Activated naive CD4-positive, alpha-beta T cell treated with anti-CD3 and anti-CD28 coated beads for 36 hours (primary cell): ENCODE measurements at regions of chr5 and their contacts with region 1.

Region 1: DNA sequence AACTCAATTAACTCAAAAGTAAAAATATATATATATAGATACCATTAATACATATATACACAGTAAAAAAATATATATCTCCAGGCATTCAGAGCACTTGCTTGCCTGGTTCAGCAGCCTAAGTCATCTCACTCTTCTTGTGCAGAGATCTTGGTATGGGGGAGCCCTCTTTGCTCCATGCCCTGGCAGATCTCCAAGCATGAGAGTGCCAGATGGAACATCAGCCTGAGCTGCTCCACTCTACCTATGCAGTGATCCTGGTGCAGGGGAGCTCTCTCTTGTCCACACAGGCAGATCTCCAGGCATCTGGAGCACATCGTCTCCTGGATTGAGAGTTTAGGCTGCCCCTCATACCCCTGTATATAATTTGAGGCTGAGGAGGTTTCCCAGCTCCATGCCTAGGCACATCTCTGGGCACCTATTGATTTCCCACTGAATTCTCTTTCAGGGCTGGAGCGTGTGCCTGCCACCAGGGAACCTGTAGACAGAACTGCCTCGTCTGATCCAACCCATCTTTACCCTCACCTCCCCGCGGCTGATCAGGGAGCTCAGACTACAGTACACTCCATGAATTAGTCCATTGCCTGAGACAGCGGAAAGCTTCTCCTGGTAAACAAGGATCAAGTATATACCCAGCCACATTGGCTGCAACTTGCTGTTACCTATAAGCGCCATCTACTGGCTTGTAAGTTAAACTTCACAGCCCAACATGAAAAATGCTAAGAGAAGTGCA is 342.4 kb upstream of the GRIA1 start:
- DNase-seq: no peak
- H3K4me3 Mint-ChIP-seq: no peak overlapping the region
- H3K27ac Mint-ChIP-seq: no peak overlapping the region
- H3K4me1 Mint-ChIP-seq: no peaks in the 10 kb centered on the region
- H3K27me3 Mint-ChIP-seq: no peaks in the 10 kb centered on the region

Region 2: DNA sequence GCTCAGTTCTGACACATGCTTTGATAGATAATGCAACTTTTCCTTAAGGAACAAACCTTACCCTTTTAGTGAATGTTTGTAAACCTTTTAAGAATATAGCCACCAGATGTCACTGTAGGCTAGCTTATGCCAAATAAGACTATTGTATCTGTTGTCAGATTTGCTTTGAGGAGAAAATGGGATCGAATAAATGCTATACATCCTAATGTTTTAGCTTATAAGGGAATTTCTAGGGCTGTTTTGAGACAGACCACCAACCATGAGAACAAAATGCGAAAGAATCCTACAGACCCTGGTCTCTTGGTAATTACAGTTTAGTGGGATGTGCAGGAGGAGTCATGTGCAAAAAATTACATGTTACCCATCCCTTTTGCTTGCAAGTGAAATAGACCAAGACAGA is 615.3 kb before region 1 on chr5:
- CTCF ChIA-PET with region 1: no interaction called
- intact Hi-C with region 1: loop called (anchors 1 kb)
- DNase-seq: no peak
- H3K4me3 Mint-ChIP-seq: no peak overlapping the region
- H3K27ac Mint-ChIP-seq: no peak overlapping the region
- H3K4me1 Mint-ChIP-seq: peaks cover 2% of the 10 kb centered on the region
- H3K27me3 Mint-ChIP-seq: no peaks in the 10 kb centered on the region

Region 3: GRCh38 chr5:152560512-152561137 is 587.4 kb before region 1 on chr5:
- CTCF ChIA-PET with region 1: no interaction called
- intact Hi-C with region 1: loop called (anchors 2 kb)
- DNase-seq: peak; percentile 65
- H3K4me3 Mint-ChIP-seq: no peak overlapping the region
- H3K27ac Mint-ChIP-seq: no peak overlapping the region
- H3K4me1 Mint-ChIP-seq: no peaks in the 10 kb centered on the region
- H3K27me3 Mint-ChIP-seq: no peaks in the 10 kb centered on the region

Region 4: GRCh38 chr5:152883066-152883775 is 264.8 kb before region 1 on chr5:
- CTCF ChIA-PET with region 1: no interaction called
- intact Hi-C with region 1: no loop called
- DNase-seq: no peak
- H3K4me3 Mint-ChIP-seq: no peak overlapping the region
- H3K27ac Mint-ChIP-seq: no peak overlapping the region
- H3K4me1 Mint-ChIP-seq: no peaks in the 10 kb centered on the region
- H3K27me3 Mint-ChIP-seq: no peaks in the 10 kb centered on the region